IMR-90 (cell line): ENCODE measurements at regions of chr1 and their contacts with region 1.

Region 1: GRCh38 chr1:121471523-121471922 is 286.7 kb downstream of the SRGAP2C start:
- DNase-seq: no peak
- ATAC-seq: no peak
- H3K4me3 ChIP-seq: no peak overlapping the region
- H3K27ac ChIP-seq: no peak overlapping the region
- H3K4me1 ChIP-seq: no peaks in the 10 kb centered on the region
- H3K27me3 ChIP-seq: no peaks in the 10 kb centered on the region; the same call in 1 of the 2 replicates
- CTCF ChIP-seq: no peak
- POLR2A ChIP-seq: no peak
- RAD21 ChIP-seq: no peak

Region 2: DNA sequence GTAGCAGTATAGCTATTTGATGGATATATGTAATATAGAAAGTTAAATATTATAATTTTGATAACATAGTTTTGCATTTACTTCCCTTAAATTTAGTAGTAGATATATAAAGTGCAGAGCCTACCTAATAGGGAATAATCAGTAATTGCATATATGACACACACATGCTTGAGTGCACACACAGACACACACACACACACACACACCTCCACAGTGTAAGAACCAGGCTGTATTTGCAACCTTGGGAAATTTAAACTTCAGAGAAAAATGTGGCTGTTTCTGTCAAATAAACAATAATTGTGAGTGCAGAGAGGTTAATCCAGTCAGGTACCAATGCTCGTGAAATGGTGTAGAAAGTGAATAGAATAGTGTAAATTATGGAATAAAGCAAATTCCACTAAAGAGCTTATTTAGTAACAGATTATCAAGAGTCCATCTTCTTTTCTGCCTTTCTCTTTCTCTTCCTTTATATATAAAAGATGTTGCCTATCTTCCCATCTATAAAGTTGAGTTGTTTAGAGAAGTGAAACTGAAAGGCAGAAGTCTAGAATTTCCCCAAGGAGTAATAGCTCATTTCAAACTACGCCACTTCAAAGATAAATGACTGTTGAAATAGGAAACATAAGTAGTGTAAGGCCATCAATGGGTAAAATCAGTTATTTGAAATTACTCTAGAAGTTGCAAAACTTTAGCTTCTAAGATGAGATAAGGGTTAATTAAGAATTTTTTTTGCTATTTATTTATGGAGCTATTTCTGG is 13.1 kb before region 1 on chr1:
- CTCF ChIA-PET with region 1: no interaction called
- POLR2A ChIA-PET with region 1: no interaction called
- dilution Hi-C with region 1: no loop called
- in situ Hi-C with region 1: no loop called
- intact Hi-C with region 1: no loop called
- DNase-seq: no peak
- ATAC-seq: no peak
- H3K4me3 ChIP-seq: no peak overlapping the region
- H3K27ac ChIP-seq: no peak overlapping the region
- H3K4me1 ChIP-seq: no peaks in the 10 kb centered on the region
- H3K27me3 ChIP-seq: no peaks in the 10 kb centered on the region; the same call in 1 of the 2 replicates
- CTCF ChIP-seq: no peak
- POLR2A ChIP-seq: no peak
- RAD21 ChIP-seq: no peak

Region 3: DNA sequence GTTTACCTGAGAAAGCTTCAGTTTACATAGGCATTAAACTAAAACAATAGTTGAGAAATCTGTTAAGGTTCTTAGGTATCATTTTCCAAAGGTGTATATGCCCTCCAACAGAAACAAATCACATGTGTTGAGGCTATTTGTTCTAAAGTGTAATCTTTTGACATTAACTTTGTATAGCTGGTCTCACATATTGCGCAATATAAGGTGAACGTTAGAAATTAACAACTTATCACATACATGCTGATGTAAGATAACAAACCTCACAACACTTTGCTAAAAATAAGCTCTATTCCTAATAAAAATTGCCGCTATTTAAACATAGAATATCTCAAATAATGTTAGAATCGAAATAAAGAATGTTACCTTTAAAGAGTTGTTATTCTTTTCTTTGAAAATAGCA is 53.8 kb after region 1 on chr1:
- CTCF ChIA-PET with region 1: no interaction called
- POLR2A ChIA-PET with region 1: no interaction called
- dilution Hi-C with region 1: no loop called
- in situ Hi-C with region 1: no loop called
- intact Hi-C with region 1: loop called (anchors 2 kb)
- DNase-seq: no peak
- ATAC-seq: no peak
- H3K4me3 ChIP-seq: no peak overlapping the region
- H3K27ac ChIP-seq: no peak overlapping the region
- H3K4me1 ChIP-seq: no peaks in the 10 kb centered on the region
- H3K27me3 ChIP-seq: peaks cover 3% of the 10 kb centered on the region; the same call in 1 of the 2 replicates
- CTCF ChIP-seq: no peak
- POLR2A ChIP-seq: no peak
- RAD21 ChIP-seq: no peak

Region 4: DNA sequence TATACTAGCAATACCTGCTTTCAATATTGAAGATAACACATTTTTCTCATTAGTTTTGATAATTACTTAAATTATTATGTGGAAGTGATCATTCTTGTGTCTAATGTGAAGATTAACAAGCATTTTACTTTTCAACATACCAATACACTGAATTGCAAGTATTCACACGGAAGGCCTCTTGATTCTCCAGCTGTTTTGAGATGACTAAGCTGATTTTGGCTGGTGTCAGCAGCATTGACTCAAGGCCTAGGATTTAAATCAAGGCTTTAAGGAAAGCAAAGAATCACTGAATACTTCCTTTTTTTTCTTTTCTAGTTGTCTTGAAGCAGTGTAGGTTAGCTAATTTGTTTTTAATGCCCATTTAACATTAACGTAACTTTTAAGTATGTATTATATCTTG is 87.0 kb after region 1 on chr1:
- CTCF ChIA-PET with region 1: no interaction called
- POLR2A ChIA-PET with region 1: no interaction called
- dilution Hi-C with region 1: no loop called
- in situ Hi-C with region 1: no loop called
- intact Hi-C with region 1: loop called (anchors 5 kb)
- DNase-seq: peak; percentile 90
- ATAC-seq: peak; percentile 92
- H3K4me3 ChIP-seq: no peak overlapping the region
- H3K27ac ChIP-seq: no peak overlapping the region
- H3K4me1 ChIP-seq: no peaks in the 10 kb centered on the region
- H3K27me3 ChIP-seq: no peaks in the 10 kb centered on the region; the same call in none of the 2 replicates
- CTCF ChIP-seq: no peak
- POLR2A ChIP-seq: no peak
- RAD21 ChIP-seq: no peak